H1 (cell line): ENCODE measurements at regions of chr11 and their contacts with region 1.

Region 1: DNA sequence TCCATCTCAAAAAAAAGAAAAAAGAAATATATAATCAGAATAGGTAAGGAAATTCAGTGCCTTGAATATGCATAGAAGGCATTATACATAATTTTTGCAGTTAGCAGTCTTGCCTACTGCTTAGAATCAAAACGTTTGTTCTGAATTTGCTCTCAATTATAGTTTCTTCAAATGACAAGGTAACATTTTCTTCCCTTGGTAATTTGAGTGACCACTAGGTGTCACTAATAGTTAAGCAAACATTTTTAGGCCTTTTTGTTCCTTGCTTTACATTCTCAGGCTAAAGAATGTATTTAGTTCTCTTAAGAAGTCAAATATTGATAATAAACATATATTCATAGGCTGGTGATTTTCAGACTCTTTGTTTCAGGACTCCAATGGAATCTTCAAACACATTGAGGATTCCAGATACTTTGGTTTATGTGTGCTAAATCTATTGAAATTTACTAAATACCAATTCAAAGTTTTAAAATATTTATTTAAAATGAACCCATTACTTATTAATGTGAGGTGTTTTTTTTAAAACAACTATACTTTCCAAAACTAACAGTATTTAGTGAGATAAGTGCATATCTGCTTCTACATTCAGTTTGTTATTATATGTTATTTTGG is 55.0 kb upstream of the DEPDC7 start:
- DNase-seq: no peak
- H3K4me3 ChIP-seq: no peak overlapping the region
- H3K27ac ChIP-seq: no peak overlapping the region
- H3K4me1 ChIP-seq: no peaks in the 10 kb centered on the region
- H3K27me3 ChIP-seq: no peaks in the 10 kb centered on the region
- CTCF ChIP-seq: peak in 2 of 3 experiments; percentile 33 to 56; a peak in 2 of 4 replicates
- EP300 ChIP-seq: no peak
- POLR2A ChIP-seq: no peak
- RAD21 ChIP-seq: peak; percentile 49 to 65

Region 2: DNA sequence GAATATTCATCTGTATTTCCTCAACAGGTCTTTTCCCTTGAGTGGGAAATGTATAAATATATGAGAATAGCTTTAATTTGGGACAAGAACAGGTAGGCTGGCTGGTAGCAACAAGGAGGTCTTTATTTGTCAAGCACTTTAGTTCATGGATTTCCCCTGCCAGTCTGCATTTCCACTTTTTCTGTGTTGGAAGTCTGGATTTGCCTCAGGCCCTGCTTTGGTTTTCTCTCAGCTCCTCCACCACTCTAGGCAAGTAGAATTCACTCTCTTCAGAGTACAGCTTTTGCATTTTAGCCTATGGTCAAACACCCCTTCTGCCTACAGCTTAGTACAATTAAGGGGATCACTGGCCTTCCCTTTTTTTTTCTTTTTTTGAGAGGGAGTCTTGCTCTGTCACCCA is 10.9 kb before region 1 on chr11:
- CTCF ChIA-PET with region 1: interaction called, 10 read pairs
- POLR2A ChIA-PET with region 1: no interaction called
- DNase-seq: no peak
- H3K4me3 ChIP-seq: no peak overlapping the region
- H3K27ac ChIP-seq: no peak overlapping the region
- H3K4me1 ChIP-seq: peaks cover 0 to 3% (median 0%) of the 10 kb centered on the region in 4 experiments; a peak in 4 of 7 replicates
- H3K27me3 ChIP-seq: no peaks in the 10 kb centered on the region
- CTCF ChIP-seq: no peak
- EP300 ChIP-seq: no peak
- POLR2A ChIP-seq: no peak
- RAD21 ChIP-seq: no peak